ENCODE measurements at regions of chr5 and their contacts with region 1.

Region 1: DNA sequence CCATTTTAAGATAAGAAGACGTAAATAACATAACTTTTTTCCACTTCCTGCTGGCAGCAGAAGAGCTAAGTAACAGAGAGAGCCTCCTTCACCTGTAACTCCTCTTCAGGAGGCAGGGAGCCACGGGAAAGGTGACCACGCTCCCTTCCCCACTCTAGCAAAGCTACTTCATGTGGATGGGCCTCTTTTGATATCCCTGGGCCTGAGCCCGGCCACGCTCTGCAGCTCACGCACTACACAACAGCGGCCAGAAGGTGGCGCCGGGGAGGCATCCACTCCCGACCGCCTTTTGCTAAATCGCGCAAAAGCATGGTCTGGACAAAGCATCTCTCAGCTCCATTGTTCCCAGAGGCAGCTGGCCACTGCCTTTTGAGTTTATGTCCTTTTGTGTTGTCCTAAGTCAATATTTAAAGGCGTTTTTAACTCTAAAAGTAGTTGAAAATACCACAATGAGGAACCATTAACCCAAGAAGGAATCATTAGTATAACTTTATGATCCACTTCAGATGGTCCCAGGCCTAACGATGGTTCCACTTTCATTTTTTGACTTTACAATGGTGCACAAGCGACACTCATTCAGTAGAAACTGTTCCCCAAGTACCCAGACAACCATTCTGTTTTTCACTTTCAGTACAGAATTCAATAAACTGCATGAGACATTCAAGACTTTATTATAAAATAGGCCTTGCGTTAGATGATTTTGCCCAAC is 23.6 kb downstream of the CMBL start:
- DNase-seq: peak; percentile 77
- H3K4me3 ChIP-seq: no peak overlapping the region
- H3K27ac ChIP-seq: no peak overlapping the region
- H3K4me1 ChIP-seq: no peaks in the 10 kb centered on the region
- H3K27me3 ChIP-seq: no peaks in the 10 kb centered on the region
- CTCF ChIP-seq: peak; percentile 64 to 89 (median 83)
- POLR2A ChIP-seq: no peak

Region 2: GRCh38 chr5:10249948-10250803 is 33.9 kb before region 1 on chr5 and contains the start of gene CCT5:
- intact Hi-C with region 1: loop called (anchors 1 kb)
- DNase-seq: peak; percentile 94
- H3K4me3 ChIP-seq: peak within 1 kb of the TSS; percentile 78 to 89
- H3K27ac ChIP-seq: peak within 1 kb of the TSS; percentile 93 to 95
- H3K4me1 ChIP-seq: peaks cover 8% of the 10 kb centered on the region
- H3K27me3 ChIP-seq: no peaks in the 10 kb centered on the region
- CTCF ChIP-seq: no peak
- POLR2A ChIP-seq: peak; percentile 59
- total RNA-seq, gene CCT5: 113 to 140 TPM

Region 3: GRCh38 chr5:10333154-10334006 is 49.3 kb after region 1 on chr5:
- intact Hi-C with region 1: loop called (anchors 10 kb)
- DNase-seq: no peak
- H3K4me3 ChIP-seq: peak overlapping the region; percentile 33 to 55
- H3K27ac ChIP-seq: peak overlapping the region; percentile 41 to 46
- H3K4me1 ChIP-seq: peaks cover 8% of the 10 kb centered on the region
- H3K27me3 ChIP-seq: no peaks in the 10 kb centered on the region
- CTCF ChIP-seq: peak in 2 of 4 experiments; percentile 33 to 34
- POLR2A ChIP-seq: no peak

Region 4: GRCh38 chr5:10424124-10424731 is 140.1 kb after region 1 on chr5:
- intact Hi-C with region 1: loop called (anchors 5 kb)
- DNase-seq: peak; percentile 17
- H3K4me3 ChIP-seq: no peak overlapping the region
- H3K27ac ChIP-seq: no peak overlapping the region
- H3K4me1 ChIP-seq: no peaks in the 10 kb centered on the region
- H3K27me3 ChIP-seq: no peaks in the 10 kb centered on the region
- CTCF ChIP-seq: peak in 3 of 4 experiments; percentile 25 to 33 (median 29)
- POLR2A ChIP-seq: no peak

Region 5: DNA sequence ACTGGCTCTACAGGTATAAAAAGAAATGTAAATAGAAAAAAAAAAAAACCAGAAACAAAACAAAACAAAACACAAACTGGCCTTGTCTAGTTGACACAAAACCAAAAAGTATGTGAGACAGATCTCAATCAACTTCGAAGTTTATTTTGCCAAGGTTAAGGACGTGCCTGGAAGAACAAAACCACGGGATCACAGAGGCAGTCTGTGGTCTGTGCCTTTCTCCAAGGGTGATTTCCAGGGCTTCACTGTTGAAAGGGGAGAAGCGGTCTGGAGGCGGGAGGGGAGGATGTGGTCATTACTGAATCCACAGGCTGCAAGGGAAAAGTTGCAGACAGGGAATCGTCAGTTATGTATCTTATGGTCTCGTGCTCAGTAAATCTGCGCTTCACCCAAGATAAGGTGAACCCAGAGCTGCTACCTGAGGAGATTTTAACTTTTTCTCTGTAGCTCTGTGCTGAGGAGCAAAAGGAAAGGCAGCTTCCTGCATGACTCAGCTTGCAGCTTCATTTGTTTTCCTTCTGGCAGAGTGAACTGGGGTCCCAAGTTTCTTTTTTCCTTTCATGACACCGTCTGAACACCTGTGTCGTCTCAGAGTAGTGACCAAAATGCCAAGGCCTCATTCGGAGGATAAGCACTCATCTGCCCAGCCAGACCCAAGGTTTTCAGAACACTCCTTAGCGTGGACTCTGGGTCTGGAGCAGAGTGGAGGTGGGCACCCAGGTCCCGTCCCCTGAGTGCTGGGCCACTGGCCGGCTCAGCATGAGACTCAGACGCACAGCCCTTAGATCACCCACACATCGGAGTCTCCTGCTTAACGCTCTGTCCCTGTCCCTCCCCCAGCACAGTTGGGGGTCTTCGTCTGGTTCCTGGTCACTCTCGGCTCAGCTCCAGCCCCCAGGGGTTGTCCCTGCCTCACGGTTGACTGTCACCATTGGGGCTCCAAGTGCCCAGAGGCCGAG is 183.4 kb after region 1 on chr5:
- intact Hi-C with region 1: no loop called
- DNase-seq: no peak
- H3K4me3 ChIP-seq: no peak overlapping the region
- H3K27ac ChIP-seq: peak overlapping the region in 1 of 2 donors; percentile 14
- H3K4me1 ChIP-seq: no peaks in the 10 kb centered on the region
- H3K27me3 ChIP-seq: no peaks in the 10 kb centered on the region
- CTCF ChIP-seq: no peak
- POLR2A ChIP-seq: no peak

Region 6: DNA sequence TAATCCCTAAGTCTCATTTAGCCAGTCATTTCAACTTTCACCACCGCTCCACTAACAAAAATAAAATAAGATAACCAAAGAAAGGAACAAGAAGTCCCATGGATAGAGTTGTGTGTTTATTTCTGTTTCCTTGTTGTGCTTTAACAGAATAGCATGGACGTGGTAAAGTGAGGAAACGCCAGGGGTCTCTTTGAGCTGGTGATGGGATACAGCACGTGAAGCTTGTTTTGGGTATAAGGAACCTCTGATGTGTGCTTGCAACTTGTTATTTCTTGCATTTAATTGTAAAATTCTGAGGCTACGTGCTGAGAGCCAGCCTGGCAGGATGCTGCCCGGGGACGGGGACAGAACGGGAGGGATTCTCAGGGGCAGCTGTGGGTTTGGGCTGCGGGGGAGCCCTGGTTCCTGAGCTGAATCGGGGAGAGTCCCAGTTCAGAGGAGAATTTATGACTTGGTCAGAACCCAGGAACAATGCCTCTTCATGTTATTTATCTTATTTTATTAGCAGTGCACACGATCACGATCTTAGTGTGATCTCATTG is 343.1 kb after region 1 on chr5:
- intact Hi-C with region 1: loop called (anchors 5 kb)
- DNase-seq: no peak
- H3K4me3 ChIP-seq: peak overlapping the region in 1 of 2 donors; percentile 6
- H3K27ac ChIP-seq: peak overlapping the region; percentile 44 to 59
- H3K4me1 ChIP-seq: peaks cover 9% of the 10 kb centered on the region
- H3K27me3 ChIP-seq: no peaks in the 10 kb centered on the region
- CTCF ChIP-seq: no peak
- POLR2A ChIP-seq: no peak